ENCODE measurements at regions of chr6 and their contacts with region 1.

Region 1: GRCh38 chr6:72580281-72580940 is 41.5 kb upstream of the KCNQ5 start:
- DNase-seq: peak; percentile 63
- H3K4me3 ChIP-seq: no peak overlapping the region
- H3K27me3 ChIP-seq: no peaks in the 10 kb centered on the region
- CTCF ChIP-seq: peak; percentile 78

Region 2: DNA sequence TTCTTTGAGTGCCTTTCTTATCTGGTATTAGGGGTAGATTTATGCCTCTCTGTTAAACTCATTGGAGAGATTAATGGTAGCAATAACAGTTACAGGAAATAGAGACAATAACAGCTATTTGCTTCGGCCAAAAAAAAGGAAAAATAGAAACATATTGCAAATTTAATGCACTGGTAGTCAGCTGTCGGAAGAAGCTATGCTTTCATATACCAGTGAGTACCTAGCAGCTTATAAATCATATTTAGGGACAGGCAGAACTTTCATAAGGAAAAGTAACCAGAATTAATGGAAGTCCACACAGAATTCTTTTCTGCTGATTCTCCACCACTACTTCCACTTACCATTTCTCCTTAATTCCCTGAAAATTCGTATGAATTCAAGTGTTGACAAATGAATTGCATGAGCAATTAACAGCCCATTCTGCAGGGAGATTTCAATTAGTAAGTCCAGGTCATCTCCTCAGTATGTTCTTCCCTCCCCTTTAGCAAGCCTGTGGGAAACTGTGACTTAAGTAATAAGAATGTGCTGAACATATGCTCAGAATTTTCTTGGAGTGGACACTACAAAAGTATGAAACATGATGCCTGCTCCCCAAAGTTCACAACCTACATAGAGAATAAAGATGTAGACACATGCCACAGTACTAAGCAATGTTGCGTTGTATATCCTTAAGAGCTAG is 155.3 kb before region 1 on chr6:
- CTCF ChIA-PET with region 1: interaction called, 22 read pairs
- POLR2A ChIA-PET with region 1: no interaction called
- DNase-seq: peak; percentile 94
- H3K4me3 ChIP-seq: no peak overlapping the region
- H3K27me3 ChIP-seq: no peaks in the 10 kb centered on the region
- CTCF ChIP-seq: no peak

Region 3: DNA sequence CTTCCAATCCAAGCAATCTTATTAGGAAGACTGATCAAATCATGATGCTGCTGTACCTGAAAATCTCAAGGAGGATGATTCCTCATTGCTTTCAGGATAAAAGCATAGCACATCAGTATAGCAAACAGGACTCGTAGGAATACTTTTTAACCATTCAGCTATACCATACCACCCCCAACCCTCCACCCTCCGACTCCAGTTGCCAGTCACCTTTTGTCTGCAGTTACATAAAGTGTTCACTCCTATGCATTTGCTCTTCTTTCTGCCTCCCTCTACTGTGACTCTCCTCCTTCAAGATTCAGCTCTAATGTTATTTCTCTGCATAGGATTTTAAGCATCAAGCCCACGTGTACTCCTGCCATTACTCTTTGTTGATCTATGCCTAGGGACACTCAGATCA is 83.2 kb before region 1 on chr6:
- CTCF ChIA-PET with region 1: no interaction called
- POLR2A ChIA-PET with region 1: no interaction called
- DNase-seq: no peak
- H3K4me3 ChIP-seq: no peak overlapping the region
- H3K27me3 ChIP-seq: no peaks in the 10 kb centered on the region
- CTCF ChIP-seq: no peak

Region 4: DNA sequence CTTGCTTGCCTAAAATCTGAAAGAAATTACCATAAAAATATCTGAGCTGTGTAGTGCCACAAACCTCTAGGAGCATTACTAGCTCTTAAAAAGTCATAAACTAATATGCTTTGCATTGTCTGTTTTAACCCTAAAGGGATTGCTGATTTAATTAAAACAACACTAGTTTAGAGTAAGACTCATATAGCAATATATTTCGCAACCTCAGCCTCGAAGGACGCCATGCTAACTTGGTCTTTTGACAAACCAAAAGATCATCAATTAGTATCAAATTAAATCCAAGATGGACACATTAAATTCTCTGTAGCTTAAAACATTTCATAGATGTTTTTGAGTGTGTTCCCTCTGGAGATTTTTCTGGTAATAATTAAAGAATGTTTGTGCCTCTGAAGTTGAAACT is 33.4 kb before region 1 on chr6:
- CTCF ChIA-PET with region 1: no interaction called
- POLR2A ChIA-PET with region 1: no interaction called
- DNase-seq: no peak
- H3K4me3 ChIP-seq: no peak overlapping the region
- H3K27me3 ChIP-seq: no peaks in the 10 kb centered on the region
- CTCF ChIP-seq: no peak

Region 5: GRCh38 chr6:72649032-72649984 is 68.9 kb after region 1 on chr6:
- CTCF ChIA-PET with region 1: no interaction called
- POLR2A ChIA-PET with region 1: no interaction called
- DNase-seq: peak; percentile 64
- H3K4me3 ChIP-seq: no peak overlapping the region
- H3K27me3 ChIP-seq: no peaks in the 10 kb centered on the region
- CTCF ChIP-seq: no peak

Measured in BJ (cell line).